ENCODE measurements at regions of chr20 and their contacts with region 1.

Region 1: DNA sequence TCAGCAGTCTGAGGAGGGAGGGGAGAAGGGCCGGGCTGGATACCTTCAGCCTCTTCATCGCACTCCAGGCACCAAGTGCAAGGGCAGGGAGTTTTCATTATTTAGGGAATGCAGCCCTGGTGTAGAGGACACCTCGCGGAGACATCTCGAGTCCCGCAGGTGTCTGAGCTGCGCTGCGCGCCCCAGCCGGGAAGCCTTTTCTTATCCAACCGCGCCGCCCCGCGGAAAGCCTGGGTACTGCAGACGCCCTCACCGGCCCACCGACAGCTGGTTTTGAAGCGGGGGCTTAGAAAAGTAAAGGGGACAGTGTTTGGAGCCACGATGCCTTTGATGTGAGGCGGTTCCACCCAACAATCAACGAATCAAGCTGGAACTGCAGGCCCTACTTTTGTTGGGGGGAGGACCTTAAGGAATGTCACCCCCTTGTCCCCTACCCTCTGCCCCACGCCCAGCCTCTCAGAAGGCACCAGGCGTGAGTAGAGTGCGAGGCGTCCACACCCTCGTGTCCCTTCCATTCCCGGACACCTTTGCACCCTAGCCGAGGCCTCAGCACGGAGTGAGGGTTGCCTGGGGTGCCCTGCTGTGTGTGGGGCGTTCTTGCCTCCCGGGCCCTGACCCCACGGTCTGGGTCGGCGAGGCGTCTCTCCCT is 8.6 kb downstream of the NKX2-2 start:
- DNase-seq: peak; percentile 54 to 66
- ATAC-seq: peak; percentile 54 to 77 (median 66)
- H3K4me3 ChIP-seq: peak overlapping the region in 9 of 10 donors; percentile 18 to 51 (median 40)
- H3K27ac ChIP-seq: no peak overlapping the region
- H3K4me1 ChIP-seq: peaks cover 4 to 36% (median 23%) of the 10 kb centered on the region in 9 donors
- H3K27me3 ChIP-seq: peaks cover 36 to 100% (median 96%) of the 10 kb centered on the region in 7 donors
- CTCF ChIP-seq: peak; percentile 86 to 98 (median 94)

Region 2: DNA sequence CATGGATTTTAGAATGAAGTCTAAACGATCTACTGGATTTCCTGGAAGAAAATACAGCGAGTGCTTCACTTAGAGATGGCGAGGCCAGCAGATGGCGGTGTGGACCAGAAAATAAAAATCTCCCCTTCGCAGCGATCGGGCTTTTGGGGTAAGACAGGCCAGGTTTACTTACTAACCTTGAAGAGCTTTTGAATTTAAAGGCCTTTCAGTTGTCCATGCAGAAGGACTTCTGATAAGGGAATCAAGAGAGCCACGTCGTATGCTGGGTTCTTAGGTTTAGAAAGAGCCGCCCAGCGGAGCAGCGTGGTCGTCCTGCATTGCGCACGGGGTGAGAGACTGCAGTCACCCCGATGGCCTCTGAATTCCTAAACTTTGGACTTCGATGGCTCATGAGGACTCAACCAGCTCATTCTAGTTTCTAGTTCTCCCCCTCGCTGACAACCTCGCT is 667.7 kb before region 1 on chr20:
- intact Hi-C with region 1: loop called in 5 of 10 experiments (anchors 2 to 10 kb)
- DNase-seq: peak; percentile 40 to 41
- ATAC-seq: peak in 4 of 8 donors; percentile 34 to 54 (median 52)
- H3K4me3 ChIP-seq: peak overlapping the region in 9 of 10 donors; percentile 3 to 39 (median 21)
- H3K27ac ChIP-seq: no peak overlapping the region
- H3K4me1 ChIP-seq: peaks cover 0 to 7% (median 4%) of the 10 kb centered on the region in 9 donors
- H3K27me3 ChIP-seq: peaks cover 0 to 48% (median 24%) of the 10 kb centered on the region in 7 donors
- CTCF ChIP-seq: peak; percentile 32 to 82 (median 72)

Region 3: DNA sequence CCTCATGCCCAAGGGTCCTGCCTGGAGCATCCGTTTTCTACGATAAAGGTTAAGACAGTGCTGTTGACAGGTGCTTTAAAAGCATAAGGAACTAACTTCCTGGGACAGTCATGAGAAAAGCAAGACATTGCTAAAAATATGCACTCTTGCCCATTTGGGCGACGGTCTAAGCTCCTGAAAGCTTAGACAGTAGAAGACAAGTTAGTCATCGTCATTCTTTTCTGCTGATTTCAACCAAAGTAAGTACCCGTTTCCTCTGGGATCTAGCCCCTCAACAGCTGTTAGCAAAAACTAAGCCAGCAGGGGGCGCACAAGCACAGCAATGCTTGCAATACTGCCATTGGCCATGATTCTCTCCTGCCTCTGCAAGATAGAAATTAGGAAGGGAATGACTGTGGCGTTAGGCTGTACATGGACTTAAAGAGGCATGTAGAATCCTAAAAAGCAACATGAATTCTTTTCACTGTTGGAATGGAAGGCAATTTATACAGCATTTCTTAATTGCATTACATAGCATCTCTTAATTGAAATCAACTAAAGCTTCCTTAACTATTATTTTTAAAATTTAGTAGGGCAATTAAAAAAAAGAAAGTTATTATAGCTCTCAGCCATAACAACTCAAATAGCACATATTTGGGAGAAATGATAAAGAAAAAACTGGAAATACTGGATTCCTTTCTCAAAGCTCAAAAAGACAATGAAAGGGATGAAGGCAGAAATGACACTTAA is 645.0 kb before region 1 on chr20:
- intact Hi-C with region 1: loop called (anchors 2 to 10 kb)
- DNase-seq: peak; percentile 84 to 89
- ATAC-seq: peak; percentile 64 to 93 (median 80)
- H3K4me3 ChIP-seq: no peak overlapping the region
- H3K27ac ChIP-seq: no peak overlapping the region
- H3K4me1 ChIP-seq: peaks cover 0 to 2% (median 0%) of the 10 kb centered on the region in 9 donors
- H3K27me3 ChIP-seq: peaks cover 0 to 44% (median 31%) of the 10 kb centered on the region in 7 donors
- CTCF ChIP-seq: peak; percentile 74 to 96 (median 94)

Region 4: DNA sequence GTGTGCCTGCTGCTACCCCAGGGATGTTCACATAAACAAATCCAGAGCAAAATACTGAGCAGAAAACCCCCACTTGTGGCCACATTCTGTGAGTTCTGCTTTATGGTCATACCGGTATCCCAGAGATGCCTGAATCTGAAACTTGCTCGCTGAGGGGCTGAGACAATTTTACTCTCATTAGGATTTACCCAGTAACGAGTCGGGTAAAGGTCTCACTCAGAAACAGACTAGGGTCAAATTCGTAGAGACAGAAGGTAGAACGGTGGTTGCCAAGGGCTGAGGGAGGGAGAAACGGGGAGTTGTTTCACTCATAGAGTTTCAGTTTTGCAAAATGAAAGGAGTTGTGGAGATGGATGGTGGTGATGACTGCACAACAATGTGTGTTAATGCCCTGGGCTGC is 54.0 kb after region 1 on chr20:
- intact Hi-C with region 1: no loop called
- DNase-seq: no peak
- ATAC-seq: no peak
- H3K4me3 ChIP-seq: no peak overlapping the region
- H3K27ac ChIP-seq: no peak overlapping the region
- H3K4me1 ChIP-seq: no peaks in the 10 kb centered on the region
- H3K27me3 ChIP-seq: peaks cover 0 to 74% (median 34%) of the 10 kb centered on the region in 7 donors
- CTCF ChIP-seq: no peak

Region 5: GRCh38 chr20:21702553-21703470 is 197.5 kb after region 1 on chr20:
- intact Hi-C with region 1: no loop called
- DNase-seq: peak; percentile 25 to 35
- ATAC-seq: peak in 7 of 8 donors; percentile 7 to 74 (median 59)
- H3K4me3 ChIP-seq: peak overlapping the region in 5 of 10 donors; percentile 3 to 30 (median 8)
- H3K27ac ChIP-seq: no peak overlapping the region
- H3K4me1 ChIP-seq: peaks cover 0 to 17% (median 12%) of the 10 kb centered on the region in 9 donors
- H3K27me3 ChIP-seq: peaks cover 47 to 100% (median 99%) of the 10 kb centered on the region in 7 donors
- CTCF ChIP-seq: peak in 8 of 9 donors; percentile 15 to 54 (median 42)